ENCODE measurements at regions of chr14 and their contacts with region 1.

Region 1: DNA sequence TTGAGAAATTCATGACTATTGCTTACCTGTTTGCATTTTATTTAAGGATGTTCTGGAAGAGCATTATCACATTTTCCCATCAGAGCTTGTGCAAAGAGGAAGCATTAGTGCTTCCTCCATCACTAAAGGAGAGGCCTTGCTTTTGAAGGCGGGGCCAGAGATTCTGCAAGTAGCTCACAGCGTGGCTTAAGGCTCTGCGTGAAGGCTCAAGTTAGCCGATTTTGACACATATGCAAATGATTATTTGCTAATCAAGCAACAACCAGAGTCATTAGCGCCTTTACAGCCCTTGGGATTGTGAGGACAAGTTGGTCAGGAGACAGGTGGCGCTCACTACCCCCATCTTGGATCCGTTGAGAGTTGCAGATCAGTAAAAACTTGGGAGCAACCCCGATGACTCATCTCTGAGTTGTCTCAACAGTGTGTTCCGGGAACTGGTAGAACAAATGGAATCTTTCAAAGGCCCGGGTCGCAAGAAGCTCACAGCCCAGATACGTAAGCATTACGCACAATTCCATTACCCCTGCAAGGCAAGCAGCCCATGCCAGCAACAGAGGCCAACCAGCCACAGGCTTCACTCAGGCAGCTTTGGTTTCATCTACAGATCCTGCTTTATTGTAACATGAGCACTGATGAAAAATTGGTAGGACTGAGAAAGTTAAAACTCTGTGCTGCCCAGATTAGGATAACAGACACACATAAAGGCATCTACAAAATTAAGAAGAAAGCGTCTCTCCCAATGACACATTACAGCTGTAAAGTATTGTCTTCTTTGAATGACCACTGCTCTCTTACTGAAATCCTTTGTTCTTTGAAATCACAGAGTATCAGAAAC is 34.9 kb upstream of the SPTSSA start:
- DNase-seq: peak; percentile 99
- H3K4me3 Mint-ChIP-seq: peak overlapping the region; percentile 26
- H3K27ac Mint-ChIP-seq: peak overlapping the region; percentile 97
- H3K4me1 Mint-ChIP-seq: peaks cover 18% of the 10 kb centered on the region
- H3K27me3 Mint-ChIP-seq: no peaks in the 10 kb centered on the region
- CTCF ChIP-seq: no peak

Region 2: GRCh38 chr14:34372773-34373172 is 124.1 kb before region 1 on chr14:
- CTCF ChIA-PET with region 1: interaction called, 23 read pairs
- POLR2A ChIA-PET with region 1: interaction called, 15 read pairs
- intact Hi-C with region 1: loop called (anchors 10 kb)
- DNase-seq: peak; percentile 47
- H3K4me3 Mint-ChIP-seq: no peak overlapping the region
- H3K27ac Mint-ChIP-seq: peak overlapping the region; percentile 4
- H3K4me1 Mint-ChIP-seq: peaks cover 38% of the 10 kb centered on the region
- H3K27me3 Mint-ChIP-seq: no peaks in the 10 kb centered on the region
- CTCF ChIP-seq: no peak